ENCODE measurements at regions of chr18 and their contacts with region 1.

Region 1: DNA sequence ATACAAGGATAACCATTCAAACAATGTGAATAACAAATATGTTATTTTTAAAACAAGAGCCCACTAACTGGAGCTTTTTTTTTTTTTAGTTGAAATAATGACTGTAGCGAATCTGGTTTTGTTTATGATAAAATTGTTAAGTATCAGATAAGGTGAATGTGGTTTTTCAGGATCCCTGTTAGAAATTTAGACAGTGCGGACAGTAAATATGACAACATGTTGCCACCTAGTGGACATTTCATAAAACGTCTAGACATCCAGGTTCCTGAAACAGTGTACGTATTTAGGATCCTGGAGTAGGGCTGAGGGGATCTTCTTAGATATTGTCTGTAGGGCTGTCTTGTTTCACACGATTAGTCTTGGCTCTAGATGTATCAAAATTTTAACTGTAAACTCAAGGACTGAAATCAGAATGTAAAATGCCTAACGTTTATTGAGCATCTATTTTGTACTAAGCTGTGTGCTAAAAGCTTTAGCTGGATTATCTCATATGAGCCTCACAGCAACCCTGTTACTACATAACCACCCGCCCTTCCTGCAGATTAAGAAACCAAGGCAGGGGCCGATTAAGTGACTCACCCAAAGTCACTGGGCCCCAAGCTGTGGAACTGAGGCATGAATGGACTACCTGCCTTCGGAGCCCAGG is 23.9 kb upstream of the CCDC68 start:
- DNase-seq: peak; percentile 37
- H3K4me3 ChIP-seq: no peak overlapping the region
- H3K27ac ChIP-seq: no peak overlapping the region
- H3K27me3 ChIP-seq: no peaks in the 10 kb centered on the region
- CTCF ChIP-seq: peak; percentile 60

Region 2: DNA sequence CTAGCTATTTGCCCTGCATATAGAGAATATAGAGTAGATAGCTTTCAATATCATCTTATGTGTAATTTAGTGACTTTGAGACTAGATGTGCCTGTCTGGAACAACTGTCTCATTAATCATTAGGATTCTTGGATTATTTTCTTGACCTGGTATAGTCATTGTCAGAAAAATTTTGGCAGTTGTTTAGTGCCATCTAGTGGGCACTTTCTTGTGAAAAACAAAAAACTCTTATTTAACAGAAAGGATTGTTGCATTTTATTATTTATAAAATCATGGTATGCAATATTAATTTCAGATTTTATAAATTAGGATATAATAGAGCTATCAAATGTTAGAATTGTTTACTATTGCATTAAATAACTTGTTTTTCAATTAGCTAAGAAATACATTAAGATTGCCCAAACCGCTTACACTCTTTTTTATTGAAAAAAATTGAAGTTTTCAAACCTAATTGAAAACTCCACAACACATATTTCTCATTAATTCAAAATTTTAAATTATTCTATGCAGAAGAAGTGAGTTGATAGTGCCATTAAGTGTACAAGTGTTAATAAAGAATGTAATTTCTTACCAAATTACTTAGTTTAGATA is 311.8 kb before region 1 on chr18:
- CTCF ChIA-PET with region 1: interaction called, 45 read pairs
- POLR2A ChIA-PET with region 1: no interaction called
- DNase-seq: no peak
- H3K4me3 ChIP-seq: no peak overlapping the region
- H3K27ac ChIP-seq: no peak overlapping the region
- H3K27me3 ChIP-seq: no peaks in the 10 kb centered on the region
- CTCF ChIP-seq: peak; percentile 62

Region 3: DNA sequence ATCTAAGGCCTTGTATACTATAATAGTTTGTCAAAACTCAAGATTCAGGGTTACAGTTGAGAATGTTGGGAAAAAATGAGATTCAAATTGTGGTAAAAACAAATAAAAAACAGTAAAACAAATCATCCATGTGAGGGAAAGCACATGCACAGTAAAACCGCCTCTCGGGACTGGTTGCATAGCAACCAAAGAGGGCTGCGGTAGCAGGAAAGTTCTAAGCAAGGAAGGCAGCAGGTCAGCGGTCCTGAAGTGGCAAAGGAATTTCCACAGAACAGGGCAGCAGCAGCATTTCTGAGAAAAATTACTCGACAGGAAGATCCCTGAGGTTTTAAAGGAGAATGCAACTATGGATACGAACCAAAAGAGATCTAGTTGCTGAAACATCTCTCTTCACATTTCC is 298.4 kb before region 1 on chr18:
- CTCF ChIA-PET with region 1: interaction called, 131 read pairs
- POLR2A ChIA-PET with region 1: no interaction called
- DNase-seq: no peak
- H3K4me3 ChIP-seq: no peak overlapping the region
- H3K27ac ChIP-seq: no peak overlapping the region
- H3K27me3 ChIP-seq: no peaks in the 10 kb centered on the region
- CTCF ChIP-seq: no peak

Region 4: GRCh38 chr18:54742659-54743604 is 240.2 kb before region 1 on chr18:
- CTCF ChIA-PET with region 1: interaction called, 12 read pairs
- POLR2A ChIA-PET with region 1: no interaction called
- DNase-seq: peak; percentile 93
- H3K4me3 ChIP-seq: no peak overlapping the region
- H3K27ac ChIP-seq: no peak overlapping the region
- H3K27me3 ChIP-seq: no peaks in the 10 kb centered on the region
- CTCF ChIP-seq: peak; percentile 24

Region 5: DNA sequence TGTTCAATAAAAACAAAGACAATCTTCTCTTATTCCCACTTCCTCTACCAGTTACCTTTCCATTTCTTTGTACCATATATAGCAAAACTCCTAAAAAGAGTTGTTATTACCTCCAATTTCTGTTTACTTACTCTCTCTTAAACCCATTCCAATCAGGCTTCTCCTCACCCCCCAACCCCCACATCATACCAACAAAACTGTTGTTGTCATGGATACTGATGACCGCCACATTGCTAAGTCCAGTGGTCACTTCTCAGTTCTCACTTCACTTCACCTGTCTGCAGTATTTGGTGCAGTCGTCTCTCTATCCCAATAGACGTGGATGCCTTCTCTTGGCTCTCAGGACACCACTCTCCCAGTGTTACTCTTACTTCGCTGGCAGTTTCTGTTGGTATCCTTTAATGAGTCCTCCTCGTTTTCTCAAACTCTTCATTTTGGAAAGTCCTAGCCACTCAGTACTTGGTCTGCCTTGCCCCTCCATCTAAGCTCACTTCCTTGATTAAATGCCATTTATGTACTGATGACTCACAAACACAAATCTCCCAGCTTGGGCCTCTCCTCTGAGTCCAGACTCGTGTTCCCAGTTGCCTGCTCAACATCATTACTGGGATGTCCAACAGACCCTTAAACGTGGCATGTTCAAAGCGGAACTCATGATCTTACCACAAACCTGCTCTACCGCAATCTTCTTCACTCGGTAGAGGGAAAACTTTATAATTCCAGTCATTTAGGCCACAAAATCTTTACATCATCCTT is 10.3 kb before region 1 on chr18:
- CTCF ChIA-PET with region 1: interaction called, 23 read pairs
- POLR2A ChIA-PET with region 1: no interaction called
- DNase-seq: no peak
- H3K4me3 ChIP-seq: no peak overlapping the region
- H3K27ac ChIP-seq: no peak overlapping the region
- H3K27me3 ChIP-seq: no peaks in the 10 kb centered on the region
- CTCF ChIP-seq: no peak